ENCODE measurements at regions of chr7 and their contacts with region 1.

Region 1: DNA sequence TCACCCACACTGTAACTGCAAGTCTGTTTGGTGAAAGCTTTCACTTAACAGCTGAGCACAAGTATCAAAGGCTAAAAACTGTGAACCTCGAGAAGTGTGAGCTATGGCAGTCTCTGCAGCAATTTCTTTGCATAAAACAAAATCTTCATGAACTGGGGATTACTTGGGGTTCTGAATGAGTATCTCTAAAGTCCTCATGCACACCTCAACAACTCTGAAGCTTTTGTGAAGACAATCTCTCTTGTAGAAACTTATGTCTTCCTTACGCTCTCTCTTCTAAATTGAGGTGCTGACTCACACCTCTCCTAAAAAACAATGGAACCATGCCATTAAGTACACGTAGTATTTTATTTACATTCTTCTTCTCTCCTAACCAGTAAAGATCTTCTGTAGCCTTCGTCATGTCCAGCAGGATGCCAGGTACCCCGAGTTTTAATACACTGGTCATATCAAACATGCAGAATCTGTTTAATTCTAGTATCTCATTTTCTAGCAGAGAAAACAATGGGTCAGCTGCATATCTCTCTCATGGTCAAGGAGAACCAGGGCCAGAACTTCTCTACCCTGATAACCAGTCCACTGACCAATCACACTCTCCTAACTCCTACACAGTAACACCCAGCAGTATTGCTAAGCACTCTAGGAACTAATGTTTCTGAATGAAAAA is 76.9 kb downstream of the UBE2H start:
- DNase-seq: peak; percentile 80
- ATAC-seq: peak; percentile 64
- H3K4me3 ChIP-seq: no peak overlapping the region
- H3K27ac ChIP-seq: no peak overlapping the region
- H3K4me1 ChIP-seq: peaks cover 10% of the 10 kb centered on the region
- H3K27me3 ChIP-seq: no peaks in the 10 kb centered on the region
- CTCF ChIP-seq: no peak
- POLR2A ChIP-seq: no peak
- RAD21 ChIP-seq: no peak

Region 2: GRCh38 chr7:129923709-129924108 is 47.8 kb after region 1 on chr7:
- CTCF ChIA-PET with region 1: no interaction called
- POLR2A ChIA-PET with region 1: interaction called, 8 read pairs
- dilution Hi-C with region 1: no loop called
- in situ Hi-C with region 1: no loop called
- intact Hi-C with region 1: loop called (anchors 2 kb)
- DNase-seq: peak; percentile 91
- ATAC-seq: peak; percentile 89
- H3K4me3 ChIP-seq: no peak overlapping the region
- H3K27ac ChIP-seq: no peak overlapping the region
- H3K4me1 ChIP-seq: peaks cover 4% of the 10 kb centered on the region; the same call in 1 of the 2 replicates
- H3K27me3 ChIP-seq: no peaks in the 10 kb centered on the region
- CTCF ChIP-seq: no peak
- POLR2A ChIP-seq: no peak
- RAD21 ChIP-seq: no peak

Region 3: DNA sequence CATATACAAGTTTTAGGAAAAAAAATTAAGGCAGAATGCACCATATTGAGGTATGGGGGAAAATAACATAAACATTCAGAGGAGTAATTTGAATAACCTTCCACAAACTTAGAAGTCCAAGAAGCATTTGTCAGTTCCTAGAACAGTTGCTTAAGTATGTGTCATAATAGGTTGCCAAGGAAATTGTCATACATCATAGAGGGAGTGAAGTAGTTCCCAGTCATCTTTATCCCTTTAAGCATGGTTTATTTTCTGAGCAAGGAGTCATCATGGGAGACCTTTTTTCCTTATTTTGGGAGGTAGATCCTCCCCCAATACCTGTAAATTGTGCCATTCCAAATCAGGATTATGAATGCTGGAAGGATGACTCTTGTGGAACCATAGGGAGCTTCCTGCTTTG is 331.8 kb after region 1 on chr7 and contains the start of gene SSMEM1:
- CTCF ChIA-PET with region 1: no interaction called
- POLR2A ChIA-PET with region 1: no interaction called
- dilution Hi-C with region 1: no loop called
- in situ Hi-C with region 1: no loop called
- intact Hi-C with region 1: no loop called
- DNase-seq: peak; percentile 84
- ATAC-seq: 0 out of 2 replicates have a peak, but pooled peaks have one; percentile 10
- H3K4me3 ChIP-seq: no peak within 1 kb of the TSS
- H3K27ac ChIP-seq: peak within 1 kb of the TSS; percentile 56; the same call in 1 of the 2 replicates
- H3K4me1 ChIP-seq: peaks cover 4% of the 10 kb centered on the region
- H3K27me3 ChIP-seq: no peaks in the 10 kb centered on the region
- CTCF ChIP-seq: no peak
- POLR2A ChIP-seq: no peak
- RAD21 ChIP-seq: no peak
- total RNA-seq, gene SSMEM1: not detected in 2 replicates